ENCODE measurements at regions of chr4 and their contacts with region 1.

Region 1: DNA sequence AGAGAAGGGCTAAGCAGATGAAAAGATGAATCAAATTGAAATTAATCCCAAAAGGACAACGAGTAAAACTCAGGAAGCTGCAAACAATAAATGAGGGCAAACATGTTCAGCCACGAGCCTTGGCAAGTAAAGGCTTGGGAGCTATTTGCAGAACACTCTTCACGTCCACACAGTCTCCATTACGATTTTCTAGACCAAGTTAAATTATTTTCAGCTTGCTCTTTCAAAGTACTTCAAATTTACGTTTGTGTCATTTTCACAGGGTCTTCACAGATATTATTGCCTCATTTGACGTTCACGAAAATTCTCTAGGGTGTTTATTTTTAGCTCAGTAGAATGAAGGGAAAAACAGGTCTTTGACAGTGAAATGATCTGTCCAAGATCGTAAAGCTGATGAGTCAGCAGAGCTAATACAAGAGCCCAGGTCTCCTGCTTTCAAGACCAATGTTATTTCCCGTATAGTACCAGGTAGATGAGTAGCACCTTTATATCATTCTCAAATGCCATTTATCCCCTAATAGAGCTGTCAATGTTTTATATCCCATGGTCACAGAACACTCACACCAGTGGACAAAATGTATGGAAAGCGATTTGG is 20.9 kb downstream of the KLB start:
- DNase-seq: no peak
- H3K4me3 ChIP-seq: no peak overlapping the region
- H3K4me3 Mint-ChIP-seq: no peak overlapping the region
- H3K27ac Mint-ChIP-seq: peak overlapping the region; percentile 42
- H3K4me1 ChIP-seq: peaks cover 28% of the 10 kb centered on the region
- H3K4me1 Mint-ChIP-seq: peaks cover 20% of the 10 kb centered on the region
- H3K27me3 ChIP-seq: no peaks in the 10 kb centered on the region
- H3K27me3 Mint-ChIP-seq: no peaks in the 10 kb centered on the region
- CTCF ChIP-seq: no peak

Region 2: GRCh38 chr4:39406763-39407583 is 20.6 kb before region 1 on chr4 and contains the start of gene KLB:
- CTCF ChIA-PET with region 1: interaction called, 3 read pairs
- POLR2A ChIA-PET with region 1: interaction called, 4 read pairs
- intact Hi-C with region 1: loop called (anchors 2 kb)
- DNase-seq: peak; percentile 67 to 77
- H3K4me3 ChIP-seq: peak within 1 kb of the TSS; percentile 32
- H3K4me3 Mint-ChIP-seq: peak within 1 kb of the TSS; percentile 83
- H3K27ac Mint-ChIP-seq: peak within 1 kb of the TSS; percentile 68
- H3K4me1 ChIP-seq: no peaks in the 10 kb centered on the region; the same call in 1 of the 2 replicates
- H3K4me1 Mint-ChIP-seq: peaks cover 7% of the 10 kb centered on the region
- H3K27me3 ChIP-seq: no peaks in the 10 kb centered on the region
- H3K27me3 Mint-ChIP-seq: no peaks in the 10 kb centered on the region
- CTCF ChIP-seq: no peak
- total RNA-seq, gene KLB: 2.2 TPM in 2 replicates

Region 3: GRCh38 chr4:39464886-39465501 is 37.4 kb after region 1 on chr4:
- CTCF ChIA-PET with region 1: no interaction called
- POLR2A ChIA-PET with region 1: no interaction called
- intact Hi-C with region 1: no loop called
- DNase-seq: peak in 1 of 2 experiments; percentile 25
- H3K4me3 ChIP-seq: no peak overlapping the region
- H3K4me3 Mint-ChIP-seq: no peak overlapping the region
- H3K27ac Mint-ChIP-seq: peak overlapping the region; percentile 71
- H3K4me1 ChIP-seq: peaks cover 5% of the 10 kb centered on the region
- H3K4me1 Mint-ChIP-seq: no peaks in the 10 kb centered on the region
- H3K27me3 ChIP-seq: no peaks in the 10 kb centered on the region
- H3K27me3 Mint-ChIP-seq: no peaks in the 10 kb centered on the region
- CTCF ChIP-seq: no peak